PC-9 (cell line): ENCODE measurements at regions of chr1 and their contacts with region 1.

Region 1: GRCh38 chr1:32817159-32817814 is at the starts of genes S100PBP and YARS1:
- DNase-seq: peak; percentile 90 to 99
- H3K4me3 ChIP-seq: peak within 1 kb of the TSS; percentile 99
- H3K27ac ChIP-seq: peak within 1 kb of the TSS; percentile 89
- H3K4me1 ChIP-seq: peaks cover 38% of the 10 kb centered on the region
- H3K27me3 ChIP-seq: no peaks in the 10 kb centered on the region
- CTCF ChIP-seq: no peak
- total RNA-seq, gene S100PBP: 42.4 and 47.0 TPM in 2 replicates
- total RNA-seq, gene YARS1: 180 and 187 TPM in 2 replicates

Region 2: GRCh38 chr1:32650752-32651460 is 166.4 kb before region 1 on chr1 and contains the start of gene RBBP4:
- CTCF ChIA-PET with region 1: no interaction called
- POLR2A ChIA-PET with region 1: no interaction called
- intact Hi-C with region 1: loop called (anchors 1 kb)
- DNase-seq: peak; percentile 85 to 98
- H3K4me3 ChIP-seq: peak within 1 kb of the TSS; percentile 81
- H3K27ac ChIP-seq: peak within 1 kb of the TSS; percentile 96
- H3K4me1 ChIP-seq: peaks cover 33% of the 10 kb centered on the region
- H3K27me3 ChIP-seq: no peaks in the 10 kb centered on the region
- CTCF ChIP-seq: no peak
- total RNA-seq, gene RBBP4: 185 and 206 TPM in 2 replicates

Region 3: DNA sequence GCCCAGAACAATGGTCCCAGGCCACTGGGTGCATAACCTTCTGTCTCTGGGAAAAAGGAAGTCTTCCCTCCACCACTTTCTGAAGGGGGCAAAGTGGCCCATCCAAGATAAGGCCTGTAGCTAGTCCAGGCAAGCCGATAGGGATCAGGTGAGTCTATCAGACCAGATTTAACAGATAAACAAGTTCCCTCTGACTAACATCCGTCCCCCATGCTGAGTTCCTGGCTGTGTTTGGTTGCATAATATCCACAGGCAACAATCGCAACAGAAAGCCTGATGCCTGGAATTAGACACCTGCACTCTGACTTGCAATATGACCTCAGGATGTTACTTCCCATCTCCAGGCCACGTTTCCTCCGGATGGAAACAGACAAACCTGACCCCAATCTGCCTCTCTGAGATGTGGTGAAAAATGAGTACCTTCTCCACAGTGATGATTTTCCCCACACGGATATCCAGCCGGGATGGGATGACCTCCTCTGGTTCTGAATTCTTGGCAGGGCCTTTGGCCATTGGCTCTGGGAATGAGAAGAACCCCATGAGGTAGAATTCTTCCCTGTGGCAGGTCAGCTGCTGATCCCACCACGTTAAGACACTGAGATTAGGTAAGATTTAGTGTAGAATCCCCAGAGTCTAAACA is 36.5 kb before region 1 on chr1:
- CTCF ChIA-PET with region 1: no interaction called
- POLR2A ChIA-PET with region 1: no interaction called
- intact Hi-C with region 1: loop called (anchors 2 kb)
- DNase-seq: peak in 1 of 2 experiments; percentile 95
- H3K4me3 ChIP-seq: no peak overlapping the region
- H3K27ac ChIP-seq: peak overlapping the region; percentile 78
- H3K4me1 ChIP-seq: peaks cover 57% of the 10 kb centered on the region
- H3K27me3 ChIP-seq: no peaks in the 10 kb centered on the region
- CTCF ChIP-seq: no peak

Region 4: DNA sequence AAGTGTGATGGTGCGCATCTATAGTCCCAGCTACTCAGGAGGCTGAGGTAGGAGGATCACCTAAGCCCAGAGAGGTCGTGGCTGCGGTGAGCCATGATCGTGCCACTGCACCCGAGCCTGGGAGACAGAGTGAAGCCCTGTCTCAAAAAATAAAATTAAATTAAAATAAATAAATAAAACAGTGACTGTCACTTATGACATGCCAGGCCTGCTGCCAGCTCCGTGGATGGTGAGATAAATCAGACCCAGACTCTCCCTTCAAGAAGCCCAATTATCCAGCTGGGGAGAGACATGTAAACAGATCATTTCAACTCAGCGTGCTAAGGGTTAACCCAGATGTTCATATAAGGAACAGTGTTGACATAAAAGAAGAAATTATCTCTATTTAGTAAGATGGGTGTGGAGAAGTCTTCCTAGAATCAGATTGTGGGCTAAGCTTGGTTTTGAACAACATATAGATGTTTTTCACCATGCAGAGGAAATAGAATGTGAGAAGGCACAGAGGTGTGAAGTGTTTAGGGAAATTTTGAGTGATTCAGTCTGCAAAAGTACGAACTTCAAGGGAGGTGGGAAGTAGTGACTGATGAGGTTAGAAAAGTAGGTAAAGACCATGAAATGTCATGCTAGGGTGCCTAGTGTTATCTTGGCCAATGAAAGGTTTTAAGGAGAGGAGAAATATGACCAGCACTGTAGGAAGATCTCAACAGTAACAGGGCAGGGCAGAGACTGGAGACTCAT is 18.4 kb before region 1 on chr1:
- CTCF ChIA-PET with region 1: no interaction called
- POLR2A ChIA-PET with region 1: no interaction called
- intact Hi-C with region 1: loop called (anchors 1 kb)
- DNase-seq: no peak
- H3K4me3 ChIP-seq: 0 out of 2 replicates have a peak overlapping the region, but pooled peaks have one; percentile 17
- H3K27ac ChIP-seq: peak overlapping the region; percentile 85
- H3K4me1 ChIP-seq: peaks cover 65% of the 10 kb centered on the region
- H3K27me3 ChIP-seq: no peaks in the 10 kb centered on the region
- CTCF ChIP-seq: no peak